ENCODE measurements at regions of chr1 and their contacts with region 1.

Region 1: DNA sequence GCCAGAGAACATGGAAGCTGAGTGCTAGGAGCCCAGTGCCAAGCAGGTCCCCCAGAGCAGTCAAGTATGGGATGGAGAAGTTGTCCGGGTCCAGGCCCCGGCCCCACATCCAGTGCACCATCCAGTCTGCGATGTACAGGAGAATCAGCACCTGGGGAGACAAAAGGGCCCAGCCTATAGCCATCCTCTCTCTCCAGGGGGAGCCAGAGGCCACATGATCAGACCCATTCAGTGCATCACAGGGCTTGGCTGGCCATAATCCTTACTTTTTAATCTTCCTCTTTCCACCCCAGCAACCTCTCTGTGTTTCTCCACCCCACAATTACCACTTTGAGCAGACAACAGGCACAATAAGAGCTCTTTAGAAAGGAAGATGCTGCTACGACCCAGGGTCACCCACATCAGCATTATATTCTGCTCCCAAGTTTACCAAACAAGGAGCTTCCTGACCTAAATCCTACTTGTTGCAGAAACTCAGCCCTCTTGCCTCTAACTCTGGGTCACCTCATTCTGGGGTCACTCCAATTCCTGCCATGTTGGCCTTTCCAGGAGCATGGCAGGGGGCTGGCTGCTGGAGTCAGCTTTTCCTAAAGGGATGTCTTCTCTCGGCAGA is 16.4 kb upstream of the RAB29 start:
- DNase-seq: peak; percentile 44
- ATAC-seq: peak; percentile 98
- H3K4me3 ChIP-seq: no peak overlapping the region
- H3K27ac ChIP-seq: no peak overlapping the region
- H3K4me1 ChIP-seq: no peaks in the 10 kb centered on the region
- H3K27me3 ChIP-seq: no peaks in the 10 kb centered on the region
- CTCF ChIP-seq: peak; percentile 90
- POLR2A ChIP-seq: 0 out of 2 replicates have a peak, but pooled peaks have one; percentile 24
- RAD21 ChIP-seq: peak; percentile 93

Region 2: DNA sequence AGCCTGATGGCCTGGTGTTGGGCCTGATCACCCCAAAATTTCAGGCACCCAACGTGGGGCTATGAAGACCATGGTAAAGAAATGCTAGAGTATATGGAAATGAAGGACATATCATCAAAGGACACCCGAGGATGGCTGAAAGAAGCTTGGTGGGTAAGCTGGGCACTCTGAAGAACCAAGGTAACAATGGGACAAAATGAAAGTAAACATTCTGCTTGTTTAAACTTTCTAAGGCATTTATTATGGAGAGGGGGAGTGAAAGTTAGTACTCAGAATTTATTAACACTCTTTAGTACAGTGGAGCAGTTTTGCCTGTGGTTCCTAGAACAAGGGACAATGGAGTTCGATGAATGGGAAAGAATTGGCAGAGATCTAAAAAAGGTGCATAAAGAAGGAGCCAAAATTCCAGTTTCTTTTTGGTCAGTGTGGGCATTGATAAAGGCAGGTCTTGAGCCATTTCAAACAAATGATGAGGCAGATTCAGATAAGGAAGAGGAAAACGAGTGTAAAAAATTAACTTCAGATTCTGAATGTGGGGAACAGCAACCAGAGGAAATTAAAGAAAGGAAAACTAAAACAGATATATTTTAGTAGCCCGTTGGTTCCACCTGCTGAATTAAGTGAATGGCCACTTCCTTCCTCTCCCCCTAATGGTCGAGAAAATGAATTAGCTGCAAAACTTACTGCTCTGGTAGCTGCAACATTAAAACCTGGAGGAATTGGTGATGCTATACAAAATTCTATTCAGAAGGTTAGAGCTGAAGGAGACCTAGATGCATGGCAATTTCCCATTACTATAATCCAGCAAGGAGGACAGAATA is 66.7 kb after region 1 on chr1:
- CTCF ChIA-PET with region 1: no interaction called
- POLR2A ChIA-PET with region 1: no interaction called
- dilution Hi-C with region 1: no loop called
- in situ Hi-C with region 1: no loop called
- intact Hi-C with region 1: no loop called
- DNase-seq: no peak
- ATAC-seq: no peak
- H3K4me3 ChIP-seq: no peak overlapping the region
- H3K27ac ChIP-seq: no peak overlapping the region
- H3K4me1 ChIP-seq: no peaks in the 10 kb centered on the region
- H3K27me3 ChIP-seq: peaks cover 3% of the 10 kb centered on the region
- CTCF ChIP-seq: no peak
- POLR2A ChIP-seq: no peak
- RAD21 ChIP-seq: no peak

Region 3: DNA sequence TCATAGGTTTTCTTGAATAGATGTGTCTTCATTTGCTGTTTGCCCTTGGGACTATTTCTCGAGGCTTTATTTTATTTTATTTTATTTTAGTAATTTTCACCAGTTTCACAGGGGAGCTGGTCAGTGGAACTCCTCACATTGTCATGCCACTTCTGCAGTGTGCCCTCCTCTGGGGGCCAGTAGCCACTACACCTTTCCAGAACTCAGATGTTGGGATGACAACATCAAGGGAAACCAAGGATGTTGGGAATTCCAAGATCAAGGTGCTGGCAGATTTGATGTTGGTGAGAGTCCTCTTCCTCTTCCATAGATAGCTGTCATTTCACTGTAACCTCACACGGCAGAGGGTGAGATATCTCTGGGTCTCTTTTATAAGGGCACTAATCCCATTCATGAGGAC is 116.1 kb after region 1 on chr1:
- CTCF ChIA-PET with region 1: interaction called, 7 read pairs
- POLR2A ChIA-PET with region 1: no interaction called
- dilution Hi-C with region 1: no loop called
- in situ Hi-C with region 1: loop called (anchors 5 kb)
- intact Hi-C with region 1: loop called (anchors 2 kb)
- DNase-seq: peak; percentile 49
- ATAC-seq: peak; percentile 88
- H3K4me3 ChIP-seq: no peak overlapping the region
- H3K27ac ChIP-seq: no peak overlapping the region
- H3K4me1 ChIP-seq: no peaks in the 10 kb centered on the region
- H3K27me3 ChIP-seq: peaks cover 11% of the 10 kb centered on the region
- CTCF ChIP-seq: peak; percentile 64
- POLR2A ChIP-seq: no peak
- RAD21 ChIP-seq: peak; percentile 63

Region 4: DNA sequence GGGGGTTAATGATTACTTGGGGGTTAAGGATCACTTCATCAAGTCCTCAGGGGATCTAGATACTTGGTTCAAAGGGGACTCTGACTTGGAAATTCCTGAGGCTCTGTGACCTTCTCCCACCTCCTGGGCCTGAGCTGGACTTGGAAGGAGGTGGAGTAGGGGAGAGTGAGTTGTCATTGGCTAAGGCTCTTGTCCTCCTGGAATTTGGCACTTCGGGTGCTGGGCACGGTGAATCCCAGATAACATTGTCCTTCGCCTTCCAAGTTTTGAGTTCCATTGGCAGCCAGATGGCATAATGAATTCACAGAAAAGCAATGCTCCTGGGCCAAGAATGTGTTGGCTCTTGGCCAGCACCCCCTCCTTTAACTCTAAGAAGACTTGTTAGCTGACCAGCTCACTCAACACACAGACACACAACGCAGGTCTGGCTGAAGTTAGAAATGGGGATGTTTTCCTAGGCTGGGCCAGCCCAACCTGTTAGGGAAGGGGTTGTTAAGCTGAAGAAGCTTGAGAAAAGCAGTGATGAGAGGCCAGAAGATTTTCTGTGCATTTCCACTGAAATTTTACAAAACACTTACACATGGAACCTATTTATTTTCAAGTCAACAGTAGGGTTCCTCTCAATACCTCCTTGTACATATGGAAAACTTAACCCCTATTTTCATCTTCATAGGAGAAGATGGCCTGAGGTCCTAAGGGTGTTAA is 121.9 kb after region 1 on chr1:
- CTCF ChIA-PET with region 1: interaction called, 7 read pairs
- POLR2A ChIA-PET with region 1: no interaction called
- dilution Hi-C with region 1: no loop called
- in situ Hi-C with region 1: loop called (anchors 5 kb)
- intact Hi-C with region 1: loop called (anchors 2 kb)
- DNase-seq: no peak
- ATAC-seq: no peak
- H3K4me3 ChIP-seq: no peak overlapping the region
- H3K27ac ChIP-seq: no peak overlapping the region
- H3K4me1 ChIP-seq: no peaks in the 10 kb centered on the region
- H3K27me3 ChIP-seq: peaks cover 13% of the 10 kb centered on the region
- CTCF ChIP-seq: no peak
- POLR2A ChIP-seq: no peak
- RAD21 ChIP-seq: no peak

Region 5: GRCh38 chr1:205919026-205919746 is 127.5 kb after region 1 on chr1:
- CTCF ChIA-PET with region 1: interaction called, 5 read pairs
- POLR2A ChIA-PET with region 1: no interaction called
- dilution Hi-C with region 1: no loop called
- in situ Hi-C with region 1: loop called (anchors 5 kb)
- intact Hi-C with region 1: loop called (anchors 1 kb)
- DNase-seq: peak; percentile 84
- ATAC-seq: peak; percentile 97
- H3K4me3 ChIP-seq: no peak overlapping the region
- H3K27ac ChIP-seq: no peak overlapping the region
- H3K4me1 ChIP-seq: no peaks in the 10 kb centered on the region
- H3K27me3 ChIP-seq: no peaks in the 10 kb centered on the region; the same call in 1 of the 2 replicates
- CTCF ChIP-seq: peak; percentile 96
- POLR2A ChIP-seq: peak; percentile 43; the same call in 1 of the 2 replicates
- RAD21 ChIP-seq: peak; percentile 97

Region 6: GRCh38 chr1:205983925-205984725 is 192.5 kb after region 1 on chr1:
- CTCF ChIA-PET with region 1: interaction called, 3 read pairs
- POLR2A ChIA-PET with region 1: no interaction called
- dilution Hi-C with region 1: no loop called
- in situ Hi-C with region 1: loop called (anchors 5 kb)
- intact Hi-C with region 1: no loop called
- DNase-seq: peak; percentile 55
- ATAC-seq: peak; percentile 99
- H3K4me3 ChIP-seq: no peak overlapping the region
- H3K27ac ChIP-seq: no peak overlapping the region
- H3K4me1 ChIP-seq: no peaks in the 10 kb centered on the region
- H3K27me3 ChIP-seq: no peaks in the 10 kb centered on the region
- CTCF ChIP-seq: peak; percentile 88
- POLR2A ChIP-seq: 0 out of 2 replicates have a peak, but pooled peaks have one; percentile 34
- RAD21 ChIP-seq: peak; percentile 87

Region 7: GRCh38 chr1:206106328-206107167 is 314.9 kb after region 1 on chr1:
- CTCF ChIA-PET with region 1: no interaction called
- POLR2A ChIA-PET with region 1: no interaction called
- dilution Hi-C with region 1: no loop called
- in situ Hi-C with region 1: loop called (anchors 10 kb)
- intact Hi-C with region 1: loop called (anchors 1 kb)
- DNase-seq: peak; percentile 79
- ATAC-seq: peak; percentile 97
- H3K4me3 ChIP-seq: no peak overlapping the region
- H3K27ac ChIP-seq: no peak overlapping the region
- H3K4me1 ChIP-seq: no peaks in the 10 kb centered on the region
- H3K27me3 ChIP-seq: peaks cover 36% of the 10 kb centered on the region
- CTCF ChIP-seq: peak; percentile 92
- POLR2A ChIP-seq: no peak
- RAD21 ChIP-seq: peak; percentile 90